ENCODE measurements at regions of chr19 and their contacts with region 1.

Region 1: GRCh38 chr19:14405758-14406644 is 13.1 kb downstream of the DDX39A start:
- DNase-seq: peak; percentile 100
- ATAC-seq: peak; percentile 92
- H3K4me3 Mint-ChIP-seq: peak overlapping the region; percentile 81
- H3K27ac Mint-ChIP-seq: peak overlapping the region; percentile 98
- H3K4me1 Mint-ChIP-seq: peaks cover 14% of the 10 kb centered on the region
- H3K27me3 Mint-ChIP-seq: no peaks in the 10 kb centered on the region
- CTCF ChIP-seq: peak; percentile 83

Region 2: DNA sequence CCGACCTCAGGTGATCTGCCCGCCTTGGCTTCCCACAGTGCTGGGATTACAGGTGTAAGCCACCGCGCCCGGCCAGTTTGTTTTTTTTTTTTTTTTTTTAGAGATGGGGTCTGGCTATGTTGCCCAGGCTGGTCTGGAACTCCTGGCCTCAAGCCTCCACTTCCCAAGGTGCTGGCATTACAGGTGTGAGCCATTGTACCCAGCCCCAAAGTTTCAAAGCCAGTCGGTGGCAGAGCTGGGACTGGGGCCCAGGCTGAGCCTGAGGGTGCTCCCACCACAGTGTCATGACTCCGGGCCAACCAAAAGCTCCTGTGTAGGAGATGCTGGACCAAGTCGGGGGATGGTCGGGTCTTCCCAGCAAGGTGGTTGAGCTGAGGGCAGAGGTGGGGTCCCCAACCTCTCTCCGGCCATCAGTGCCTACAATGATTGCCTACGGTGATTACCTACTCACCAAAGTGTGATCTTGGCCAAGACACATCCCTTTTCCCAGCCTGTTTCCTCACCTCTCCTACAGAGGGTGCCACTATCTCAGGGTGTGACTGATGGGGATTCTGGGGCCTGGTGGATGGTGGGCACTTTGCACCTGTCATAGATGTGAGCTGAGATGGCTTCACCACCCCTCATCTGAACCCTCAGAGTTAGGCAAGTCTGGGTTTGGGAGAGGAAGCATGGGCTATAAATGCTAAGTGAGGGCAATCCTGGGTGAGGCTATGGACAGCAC is 309.6 kb before region 1 on chr19:
- CTCF ChIA-PET with region 1: interaction called, 14 read pairs
- POLR2A ChIA-PET with region 1: no interaction called
- DNase-seq: no peak
- ATAC-seq: peak; percentile 66
- H3K4me3 Mint-ChIP-seq: no peak overlapping the region
- H3K27ac Mint-ChIP-seq: peak overlapping the region; percentile 9; the same call in 1 of the 2 replicates
- H3K4me1 Mint-ChIP-seq: peaks cover 8% of the 10 kb centered on the region
- H3K27me3 Mint-ChIP-seq: peaks cover 22% of the 10 kb centered on the region
- CTCF ChIP-seq: no peak

Region 3: DNA sequence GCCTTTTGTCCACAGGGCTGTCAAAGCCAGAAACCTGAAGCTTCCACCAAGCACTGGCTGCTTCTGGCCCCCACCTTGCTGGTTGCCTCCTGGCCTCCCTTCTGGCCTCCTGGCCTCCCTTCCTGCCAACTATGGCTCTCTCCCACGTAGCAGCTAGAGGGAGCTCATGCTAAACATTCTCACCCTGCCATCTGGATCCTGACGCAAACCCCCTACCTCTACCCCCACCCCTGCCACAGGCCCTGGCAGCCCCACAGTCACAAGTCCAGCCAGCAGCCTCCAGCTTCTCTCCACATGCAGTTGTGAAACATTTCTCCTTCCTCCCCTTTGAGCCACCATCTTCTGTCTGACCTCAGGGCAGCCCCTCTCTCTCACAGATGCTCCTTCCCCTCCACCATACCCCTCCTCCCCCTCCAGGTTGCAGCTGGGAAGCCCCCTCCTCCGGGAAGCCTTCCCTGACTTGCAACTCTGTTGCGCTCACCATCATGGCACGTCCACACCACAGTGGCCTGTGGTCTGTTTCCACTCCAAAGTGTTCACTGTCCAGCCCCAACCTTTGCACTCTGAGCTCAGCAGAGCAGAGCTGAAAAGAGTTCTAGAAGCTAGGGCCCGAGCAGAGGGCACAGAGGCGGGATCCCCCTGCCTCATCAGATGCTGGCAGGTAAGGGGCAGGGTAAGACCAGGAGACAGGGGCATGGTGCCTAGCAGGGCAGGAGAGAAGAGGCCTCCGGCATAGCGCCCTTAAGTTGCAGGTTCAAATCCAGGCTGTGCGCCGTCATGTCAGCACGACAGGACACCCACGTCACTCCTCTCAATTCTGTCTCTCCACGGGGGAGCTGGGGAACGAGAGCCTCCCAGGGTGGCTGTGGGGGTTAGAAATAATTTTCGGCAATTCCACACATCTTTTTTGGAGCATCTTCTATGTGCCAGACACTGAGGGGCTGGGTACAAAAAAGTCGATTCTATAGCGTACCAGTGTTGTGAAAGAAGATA is 207.3 kb before region 1 on chr19:
- CTCF ChIA-PET with region 1: interaction called, 29 read pairs
- POLR2A ChIA-PET with region 1: no interaction called
- DNase-seq: peak; percentile 33
- ATAC-seq: no peak
- H3K4me3 Mint-ChIP-seq: no peak overlapping the region
- H3K27ac Mint-ChIP-seq: no peak overlapping the region
- H3K4me1 Mint-ChIP-seq: peaks cover 39% of the 10 kb centered on the region
- H3K27me3 Mint-ChIP-seq: no peaks in the 10 kb centered on the region
- CTCF ChIP-seq: no peak

Region 4: DNA sequence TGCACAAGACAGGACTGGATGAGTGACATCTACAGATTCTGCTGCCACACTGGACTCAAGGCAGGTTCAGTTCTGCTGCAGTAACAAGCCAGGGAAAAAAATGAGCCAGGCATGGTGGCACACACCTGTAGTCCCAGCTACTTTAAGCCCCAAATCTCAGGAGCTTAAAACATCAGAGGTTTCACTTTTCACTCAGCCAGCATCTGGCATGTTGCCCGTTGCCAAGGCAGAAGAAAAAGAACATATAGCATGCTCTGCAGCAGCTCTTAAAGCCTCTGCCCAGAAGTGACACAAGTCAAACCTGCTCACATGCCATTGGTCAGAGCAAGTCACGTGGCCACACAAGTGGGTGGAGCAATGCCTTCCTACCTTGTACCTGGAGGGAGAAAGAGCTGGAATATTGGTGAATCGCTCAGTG is 39.5 kb before region 1 on chr19:
- CTCF ChIA-PET with region 1: interaction called, 197 read pairs
- POLR2A ChIA-PET with region 1: interaction called, 28 read pairs
- DNase-seq: peak; percentile 89
- ATAC-seq: peak; percentile 65
- H3K4me3 Mint-ChIP-seq: no peak overlapping the region
- H3K27ac Mint-ChIP-seq: no peak overlapping the region
- H3K4me1 Mint-ChIP-seq: peaks cover 24% of the 10 kb centered on the region
- H3K27me3 Mint-ChIP-seq: no peaks in the 10 kb centered on the region; the same call in 1 of the 2 replicates
- CTCF ChIP-seq: no peak

Region 5: GRCh38 chr19:14394167-14394566 is 11.8 kb before region 1 on chr19:
- CTCF ChIA-PET with region 1: interaction called, 29 read pairs
- POLR2A ChIA-PET with region 1: interaction called, 4 read pairs
- DNase-seq: no peak
- ATAC-seq: no peak
- H3K4me3 Mint-ChIP-seq: no peak overlapping the region
- H3K27ac Mint-ChIP-seq: no peak overlapping the region
- H3K4me1 Mint-ChIP-seq: peaks cover 9% of the 10 kb centered on the region
- H3K27me3 Mint-ChIP-seq: no peaks in the 10 kb centered on the region
- CTCF ChIP-seq: no peak

Region 6: GRCh38 chr19:14450168-14450874 is 44.3 kb after region 1 on chr19:
- CTCF ChIA-PET with region 1: interaction called, 11 read pairs
- POLR2A ChIA-PET with region 1: interaction called, 4 read pairs
- DNase-seq: peak; percentile 100
- ATAC-seq: peak; percentile 99
- H3K4me3 Mint-ChIP-seq: no peak overlapping the region
- H3K27ac Mint-ChIP-seq: peak overlapping the region; percentile 89
- H3K4me1 Mint-ChIP-seq: no peaks in the 10 kb centered on the region
- H3K27me3 Mint-ChIP-seq: no peaks in the 10 kb centered on the region
- CTCF ChIP-seq: no peak

Region 7: DNA sequence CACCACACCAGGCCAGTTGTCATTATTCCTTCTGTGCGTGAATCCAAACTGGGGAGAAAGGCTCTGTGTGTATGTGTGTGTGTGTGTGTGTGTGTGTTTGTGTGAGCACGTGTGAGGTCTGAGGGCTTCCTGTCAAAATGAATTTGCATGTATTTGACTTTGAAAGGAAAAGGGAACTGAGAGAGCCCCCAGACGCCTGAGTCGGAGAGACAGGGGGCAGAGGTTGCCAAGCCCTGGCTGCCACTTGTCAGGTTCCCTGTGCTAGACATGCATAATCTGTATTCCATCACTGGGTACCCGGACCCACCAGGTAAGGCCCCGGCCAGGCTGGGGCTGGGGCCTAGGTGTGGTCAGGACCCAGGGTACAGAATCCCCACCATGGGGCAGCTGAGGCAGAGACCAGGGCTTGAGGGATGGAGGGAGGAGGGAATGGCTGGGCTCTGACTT is 176.9 kb after region 1 on chr19 and contains the start of gene CLEC17A:
- CTCF ChIA-PET with region 1: no interaction called
- POLR2A ChIA-PET with region 1: no interaction called
- DNase-seq: no peak
- ATAC-seq: no peak
- H3K4me3 Mint-ChIP-seq: no peak within 1 kb of the TSS
- H3K27ac Mint-ChIP-seq: no peak within 1 kb of the TSS
- H3K4me1 Mint-ChIP-seq: peaks cover 5% of the 10 kb centered on the region
- H3K27me3 Mint-ChIP-seq: peaks cover 9% of the 10 kb centered on the region
- CTCF ChIP-seq: no peak
- total RNA-seq, gene CLEC17A: 0.14 TPM in 1 of 3 replicates, not detected in the others

Region 8: DNA sequence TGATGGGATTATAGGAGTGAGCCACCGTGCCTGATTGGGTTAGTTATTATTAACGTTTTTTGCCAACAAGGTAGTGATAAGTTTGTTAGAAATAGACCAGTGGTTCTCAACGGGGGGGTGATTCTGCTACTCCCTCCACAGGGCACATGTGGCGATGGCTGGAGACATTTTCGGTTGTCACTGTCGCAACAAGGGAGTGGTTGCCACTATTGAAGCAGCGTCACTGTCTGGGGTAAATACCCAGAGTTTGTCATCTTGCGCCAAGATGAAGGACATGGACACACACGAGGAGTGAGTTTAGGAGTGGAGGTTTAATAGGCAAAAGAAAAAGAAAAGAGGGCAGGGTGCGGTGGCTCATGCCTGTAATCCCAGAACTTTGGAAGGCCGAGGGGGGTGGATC is 249.7 kb after region 1 on chr19:
- CTCF ChIA-PET with region 1: no interaction called
- POLR2A ChIA-PET with region 1: no interaction called
- DNase-seq: no peak
- ATAC-seq: no peak
- H3K4me3 Mint-ChIP-seq: no peak overlapping the region
- H3K27ac Mint-ChIP-seq: no peak overlapping the region
- H3K4me1 Mint-ChIP-seq: no peaks in the 10 kb centered on the region
- H3K27me3 Mint-ChIP-seq: peaks cover 5% of the 10 kb centered on the region
- CTCF ChIP-seq: no peak

Measured in WTC11 (cell line).